ENCODE measurements at regions of chr5 and their contacts with region 1.

Region 1: DNA sequence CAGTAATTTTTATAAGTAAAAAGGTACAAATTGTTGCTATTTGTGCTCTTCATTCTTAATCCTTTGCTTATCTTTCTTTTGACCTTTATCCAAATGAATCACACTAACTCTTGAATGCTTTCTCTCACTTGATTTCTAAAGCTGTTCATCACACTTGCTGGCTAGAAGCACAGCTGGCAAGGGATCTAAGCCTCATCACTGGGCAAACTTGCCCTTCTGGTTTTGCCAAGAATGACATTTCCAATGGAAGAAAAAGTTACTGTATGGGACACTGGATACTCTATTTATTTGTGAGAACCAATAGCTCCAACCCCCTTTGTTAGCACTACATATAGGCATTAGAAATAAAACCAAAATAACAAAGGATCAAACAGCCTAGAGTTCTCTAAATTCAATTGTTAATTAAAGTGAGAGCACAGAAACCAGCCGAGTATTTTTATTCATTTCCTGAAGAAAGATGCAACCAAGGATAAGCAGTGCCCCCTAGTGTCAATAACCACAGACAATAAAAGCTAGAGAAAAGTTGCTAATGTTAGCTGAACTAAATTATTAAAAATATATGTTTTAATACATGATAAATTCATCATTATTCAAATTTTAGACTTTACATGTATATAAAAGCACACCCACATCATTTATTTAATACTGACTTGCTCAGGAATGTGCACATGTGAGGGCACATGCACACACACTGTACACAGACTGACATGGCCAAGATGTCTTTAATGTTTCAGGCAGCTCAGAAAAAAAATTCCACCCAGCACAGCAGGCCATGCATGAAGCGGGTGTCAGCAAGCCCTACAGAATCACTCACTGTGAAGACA is 59.8 kb upstream of the POU5F2 start:
- DNase-seq: no peak
- H3K4me3 ChIP-seq: no peak overlapping the region
- H3K27ac ChIP-seq: no peak overlapping the region
- H3K4me1 ChIP-seq: peaks cover 0 to 2% (median 0%) of the 10 kb centered on the region in 4 experiments; a peak in 1 of 7 replicates
- H3K27me3 ChIP-seq: 0 out of 7 replicates have a peak, but pooled peaks cover 0 to 2% (median 0%) of the 10 kb centered on the region in 4 experiments
- CTCF ChIP-seq: peak in 2 of 3 experiments; percentile 37 to 44; a peak in 2 of 4 replicates
- EP300 ChIP-seq: no peak
- POLR2A ChIP-seq: no peak
- RAD21 ChIP-seq: peak; percentile 73 to 79

Region 2: DNA sequence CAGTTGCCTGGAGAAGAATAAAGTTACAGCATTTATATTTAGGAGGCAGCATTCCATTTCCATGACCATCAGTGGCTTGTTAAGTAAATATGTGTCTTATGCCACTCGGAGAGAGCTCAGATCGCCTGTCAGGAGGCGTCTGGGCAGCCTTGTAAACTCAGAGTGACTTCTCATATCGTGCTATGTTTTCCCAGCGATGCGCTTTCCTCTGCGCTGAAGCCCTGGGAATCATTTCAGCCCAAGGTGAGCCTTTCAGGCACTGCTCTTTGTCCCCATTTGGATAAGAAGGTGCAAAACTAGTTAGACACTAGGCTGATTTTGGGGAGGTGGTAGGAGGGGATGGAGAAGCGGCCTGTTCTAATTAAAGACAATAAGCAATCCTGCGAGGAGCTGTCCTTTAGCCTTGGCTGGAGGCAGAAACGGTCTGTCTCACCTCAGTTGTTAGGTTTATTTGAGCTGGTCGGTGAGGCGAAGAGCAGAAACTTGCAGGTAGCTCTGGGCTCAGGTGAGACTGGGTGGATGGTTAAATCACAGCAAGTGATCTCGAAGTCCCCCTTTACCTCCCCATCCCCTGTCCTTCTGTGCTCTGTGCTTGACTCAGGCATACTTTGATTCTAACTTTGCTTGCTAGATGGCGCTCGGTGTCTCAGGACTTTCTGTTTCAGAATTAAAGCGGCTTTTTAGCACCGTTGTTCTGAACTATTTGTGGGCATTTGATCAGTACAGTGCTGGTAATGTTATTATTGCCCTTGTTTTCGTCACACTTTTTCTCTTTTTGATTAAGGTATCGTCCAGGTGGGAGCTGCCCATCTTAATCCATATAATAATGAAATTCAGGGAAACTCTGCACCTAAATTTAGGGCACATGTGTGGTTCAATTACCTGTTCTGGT is 193.6 kb before region 1 on chr5:
- CTCF ChIA-PET with region 1: interaction called, 28 read pairs
- POLR2A ChIA-PET with region 1: no interaction called
- DNase-seq: peak in 1 of 2 experiments; percentile 76
- H3K4me3 ChIP-seq: peak overlapping the region in 1 of 4 experiments; percentile 37; a peak in 3 of 8 replicates
- H3K27ac ChIP-seq: no peak overlapping the region
- H3K4me1 ChIP-seq: peaks cover 5 to 15% (median 11%) of the 10 kb centered on the region in 4 experiments; a peak in 6 of 7 replicates
- H3K27me3 ChIP-seq: peaks cover 78 to 98% (median 89%) of the 10 kb centered on the region in 4 experiments
- CTCF ChIP-seq: peak; percentile 20 to 80 (median 63)
- EP300 ChIP-seq: peak in 1 of 2 experiments; percentile 24; a peak in 1 of 3 replicates
- POLR2A ChIP-seq: no peak
- RAD21 ChIP-seq: peak; percentile 70 to 81

Region 3: DNA sequence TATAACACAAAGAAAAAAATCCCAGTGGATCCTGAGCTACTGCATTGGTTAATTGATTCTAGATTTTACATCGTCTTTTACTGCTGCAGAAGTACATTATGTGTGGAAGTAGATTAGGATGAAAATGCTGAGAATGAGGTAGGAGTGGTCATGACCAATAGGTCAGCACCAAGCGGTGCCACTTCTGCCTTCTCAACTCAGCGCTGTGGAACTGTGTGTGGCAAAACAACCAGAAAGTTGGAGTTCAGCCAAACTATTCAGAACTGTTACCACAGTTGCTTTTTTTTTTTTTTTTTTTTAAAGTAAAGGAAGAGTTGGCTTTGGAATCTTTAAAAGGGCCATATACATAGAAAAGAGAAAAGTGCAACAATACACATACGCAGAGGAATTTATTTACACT is 84.0 kb before region 1 on chr5:
- CTCF ChIA-PET with region 1: interaction called, 13 read pairs
- POLR2A ChIA-PET with region 1: no interaction called
- DNase-seq: no peak
- H3K4me3 ChIP-seq: no peak overlapping the region
- H3K27ac ChIP-seq: no peak overlapping the region
- H3K4me1 ChIP-seq: no peaks in the 10 kb centered on the region
- H3K27me3 ChIP-seq: no peaks in the 10 kb centered on the region
- CTCF ChIP-seq: no peak
- EP300 ChIP-seq: no peak
- POLR2A ChIP-seq: no peak
- RAD21 ChIP-seq: no peak

Region 4: GRCh38 chr5:93755716-93756115 is 45.5 kb before region 1 on chr5:
- CTCF ChIA-PET with region 1: no interaction called
- POLR2A ChIA-PET with region 1: no interaction called
- DNase-seq: peak in 1 of 2 experiments; percentile 47
- H3K4me3 ChIP-seq: no peak overlapping the region
- H3K27ac ChIP-seq: no peak overlapping the region
- H3K4me1 ChIP-seq: peaks cover 0 to 3% (median 0%) of the 10 kb centered on the region in 4 experiments; a peak in 1 of 7 replicates
- H3K27me3 ChIP-seq: no peaks in the 10 kb centered on the region
- CTCF ChIP-seq: no peak
- EP300 ChIP-seq: no peak
- POLR2A ChIP-seq: no peak
- RAD21 ChIP-seq: no peak

Region 5: DNA sequence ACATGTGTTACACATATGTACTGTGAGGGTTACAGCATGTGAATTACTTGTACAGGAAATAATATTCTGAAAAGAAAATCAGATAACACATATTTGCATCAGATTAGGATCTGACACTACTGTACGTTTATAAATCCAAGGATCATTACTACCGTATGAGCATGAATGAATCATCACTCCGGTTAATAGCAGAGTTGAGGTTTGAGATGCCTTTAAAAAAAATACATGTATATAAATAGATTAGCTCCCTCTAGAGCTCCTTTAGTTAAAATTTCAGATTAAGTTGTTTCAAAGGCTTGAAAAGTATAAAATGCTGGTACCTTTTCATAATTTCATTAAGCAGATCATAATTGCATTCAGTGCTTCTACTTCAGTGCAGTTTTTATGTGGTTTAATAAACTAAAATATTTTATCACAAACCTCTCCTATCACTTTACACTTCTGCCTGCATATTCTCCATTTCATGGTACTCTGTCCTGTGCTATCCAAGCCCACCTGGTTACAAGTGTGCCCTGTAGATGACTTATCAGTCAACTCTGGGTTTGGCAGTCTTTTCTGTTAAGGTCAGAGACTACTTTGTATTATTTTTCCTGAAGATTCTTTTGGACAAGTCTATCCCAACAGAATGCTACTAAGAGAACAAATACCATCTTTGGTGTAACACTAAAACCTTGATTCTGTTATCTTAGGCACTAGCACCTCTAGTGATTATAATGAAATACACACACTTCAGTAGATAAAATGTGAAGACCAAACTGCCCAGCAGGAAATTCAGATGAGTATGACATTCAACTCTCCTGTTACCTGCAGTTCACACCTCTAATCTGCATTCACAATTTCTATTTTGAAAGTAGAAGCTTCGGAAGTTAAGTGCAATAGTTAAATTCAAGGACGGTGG is 11.8 kb before region 1 on chr5:
- CTCF ChIA-PET with region 1: interaction called, 26 read pairs
- POLR2A ChIA-PET with region 1: no interaction called
- DNase-seq: no peak
- H3K4me3 ChIP-seq: no peak overlapping the region
- H3K27ac ChIP-seq: no peak overlapping the region
- H3K4me1 ChIP-seq: no peaks in the 10 kb centered on the region; a peak in 1 of 7 replicates
- H3K27me3 ChIP-seq: peaks cover 0 to 1% (median 0%) of the 10 kb centered on the region in 4 experiments; a peak in 1 of 7 replicates
- CTCF ChIP-seq: no peak; a peak in 1 of 4 replicates
- EP300 ChIP-seq: no peak
- POLR2A ChIP-seq: no peak
- RAD21 ChIP-seq: peak in 1 of 2 experiments; percentile 48; a peak in 3 of 4 replicates

Region 6: GRCh38 chr5:93831449-93831848 is 30.2 kb after region 1 on chr5:
- CTCF ChIA-PET with region 1: no interaction called
- POLR2A ChIA-PET with region 1: no interaction called
- DNase-seq: no peak
- H3K4me3 ChIP-seq: no peak overlapping the region
- H3K27ac ChIP-seq: no peak overlapping the region
- H3K4me1 ChIP-seq: no peaks in the 10 kb centered on the region
- H3K27me3 ChIP-seq: no peaks in the 10 kb centered on the region
- CTCF ChIP-seq: no peak
- EP300 ChIP-seq: no peak
- POLR2A ChIP-seq: no peak
- RAD21 ChIP-seq: no peak

Region 7: GRCh38 chr5:94086206-94086605 is 285.0 kb after region 1 on chr5:
- CTCF ChIA-PET with region 1: no interaction called
- POLR2A ChIA-PET with region 1: no interaction called
- DNase-seq: no peak
- H3K4me3 ChIP-seq: no peak overlapping the region
- H3K27ac ChIP-seq: no peak overlapping the region
- H3K4me1 ChIP-seq: no peaks in the 10 kb centered on the region
- H3K27me3 ChIP-seq: peaks cover 0 to 1% (median 0%) of the 10 kb centered on the region in 4 experiments; a peak in 1 of 7 replicates
- CTCF ChIP-seq: no peak
- EP300 ChIP-seq: no peak
- POLR2A ChIP-seq: no peak
- RAD21 ChIP-seq: no peak